ENCODE measurements at regions of chr9 and their contacts with region 1.

Region 1: GRCh38 chr9:29717631-29718030 is 2144.3 kb upstream of the C9orf72 start:
- DNase-seq: no peak

Region 2: GRCh38 chr9:27829621-27830020 is 1888.0 kb before region 1 on chr9:
- intact Hi-C with region 1: loop called in 1 of 2 experiments (anchors 10 kb)
- DNase-seq: no peak

Region 3: GRCh38 chr9:29773676-29774075 is 56.0 kb after region 1 on chr9:
- intact Hi-C with region 1: no loop called
- DNase-seq: no peak